ENCODE measurements at regions of chr9 and their contacts with region 1.

Region 1: GRCh38 chr9:137302176-137302994 is at the start of gene NRARP:
- DNase-seq: peak; percentile 90 to 97 (median 92)
- ATAC-seq: peak; percentile 95
- H3K4me3 ChIP-seq: peak within 1 kb of the TSS; percentile 56
- H3K4me3 Mint-ChIP-seq: peak within 1 kb of the TSS; percentile 50 to 88 (median 78)
- H3K27ac ChIP-seq: peak within 1 kb of the TSS; percentile 48
- H3K27ac Mint-ChIP-seq: peak within 1 kb of the TSS in 1 of 9 donors; percentile 26
- H3K4me1 ChIP-seq: peaks cover 7 to 27% of the 10 kb centered on the region in 2 donors
- H3K4me1 Mint-ChIP-seq: peaks cover 0 to 14% (median 11%) of the 10 kb centered on the region in 7 donors
- H3K27me3 ChIP-seq: peaks cover 15 to 19% of the 10 kb centered on the region in 2 donors
- H3K27me3 Mint-ChIP-seq: peaks cover 0 to 30% (median 5%) of the 10 kb centered on the region in 5 donors
- total RNA-seq, gene NRARP: 0.70 to 2.7 (median 1.7) TPM

Region 2: DNA sequence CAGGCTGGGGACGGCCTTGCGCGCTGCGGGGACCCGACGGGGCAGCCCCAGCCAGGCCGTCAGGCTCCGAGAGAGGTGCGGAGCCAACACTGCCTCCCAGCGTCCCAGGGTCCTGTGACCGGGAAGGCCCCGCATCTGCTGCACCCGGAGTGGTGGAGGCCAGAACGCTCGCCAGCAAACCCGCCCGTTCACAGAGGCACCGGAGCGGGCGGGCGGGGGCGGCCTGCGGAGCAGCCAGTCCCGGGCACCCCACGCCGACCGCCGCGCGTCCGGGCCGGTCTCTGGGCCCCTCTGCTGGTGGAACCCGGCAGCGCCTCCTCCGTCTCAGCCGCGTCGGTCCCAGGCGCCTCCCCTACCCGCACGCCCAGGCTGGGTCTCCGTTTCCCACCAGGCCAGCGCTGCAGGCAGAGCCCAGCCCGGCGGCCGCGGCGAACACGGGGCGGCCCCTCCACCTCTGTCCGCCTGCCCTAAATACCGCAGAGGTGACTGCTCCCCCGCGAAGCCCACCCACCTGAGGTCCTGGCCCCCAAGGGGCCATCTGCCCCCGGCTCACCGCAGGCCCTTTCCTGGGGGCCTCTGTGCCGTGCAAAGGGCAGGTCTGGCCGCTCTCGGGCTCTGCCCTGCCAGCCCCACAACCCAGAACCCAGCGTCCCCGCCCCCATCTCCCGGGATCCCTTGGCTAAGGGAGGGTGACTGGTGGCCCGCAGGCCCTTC is 104.6 kb after region 1 on chr9:
- CTCF ChIA-PET with region 1: interaction called, 4 read pairs
- POLR2A ChIA-PET with region 1: no interaction called
- intact Hi-C with region 1: loop called (anchors 1 to 2 kb)
- DNase-seq: peak; percentile 34 to 76 (median 48)
- ATAC-seq: peak; percentile 88
- H3K4me3 ChIP-seq: no peak overlapping the region
- H3K4me3 Mint-ChIP-seq: peak overlapping the region in 1 of 10 donors; percentile 61
- H3K27ac ChIP-seq: no peak overlapping the region
- H3K27ac Mint-ChIP-seq: no peak overlapping the region
- H3K4me1 ChIP-seq: peaks cover 3% of the 10 kb centered on the region in 2 donors
- H3K4me1 Mint-ChIP-seq: peaks cover 0 to 12% (median 6%) of the 10 kb centered on the region in 7 donors
- H3K27me3 ChIP-seq: no peaks in the 10 kb centered on the region
- H3K27me3 Mint-ChIP-seq: peaks cover 0 to 4% (median 0%) of the 10 kb centered on the region in 5 donors

Region 3: DNA sequence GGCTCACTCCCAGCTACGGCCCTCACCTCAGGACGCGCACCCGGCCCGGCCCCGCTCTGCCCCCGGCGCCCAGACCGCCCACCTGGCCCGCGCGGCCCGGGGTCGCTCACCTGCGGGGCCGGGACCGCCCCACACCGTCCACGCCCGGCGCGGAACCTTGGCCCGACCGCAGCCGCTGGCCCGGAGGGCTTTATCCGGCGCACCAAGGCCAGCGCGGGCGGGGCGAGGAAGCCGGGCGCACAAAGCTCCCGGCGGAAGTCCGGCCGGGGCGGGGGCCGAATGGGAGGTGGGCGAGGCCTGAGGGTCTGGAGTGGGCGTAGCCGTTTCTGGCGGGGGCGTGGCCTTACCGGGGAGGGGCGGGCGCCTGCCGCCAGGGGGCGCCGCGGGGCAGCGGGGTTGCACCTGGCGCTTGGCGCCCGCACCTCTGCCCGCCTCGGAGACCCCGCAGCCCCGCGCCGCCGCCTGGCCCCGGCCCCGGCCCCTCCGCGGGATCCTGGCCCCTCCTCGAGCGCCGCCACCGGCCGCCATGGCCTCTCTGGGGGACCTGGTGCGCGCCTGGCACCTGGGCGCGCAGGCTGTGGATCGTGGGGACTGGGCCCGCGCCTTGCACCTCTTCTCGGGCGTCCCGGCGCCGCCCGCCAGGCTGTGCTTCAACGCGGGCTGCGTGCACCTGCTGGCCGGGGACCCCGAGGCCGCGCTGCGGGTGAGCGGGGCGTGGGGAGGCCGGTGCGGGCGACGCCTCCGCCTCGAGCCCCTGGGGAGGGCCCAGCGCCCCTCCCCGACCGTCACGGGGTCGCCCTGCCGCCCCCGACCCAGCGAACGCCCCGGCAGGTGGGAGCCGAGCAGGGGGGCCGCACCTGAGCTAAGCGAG is 120.9 kb after region 1 on chr9 and contains the starts of genes EXD3 and NOXA1:
- CTCF ChIA-PET with region 1: interaction called, 4 read pairs
- POLR2A ChIA-PET with region 1: interaction called, 4 read pairs
- intact Hi-C with region 1: loop called in 1 of 2 experiments (anchors 5 kb)
- DNase-seq: peak; percentile 84 to 99 (median 91)
- ATAC-seq: peak; percentile 97
- H3K4me3 ChIP-seq: peak within 1 kb of the TSS; percentile 65
- H3K4me3 Mint-ChIP-seq: peak within 1 kb of the TSS; percentile 76 to 90 (median 82)
- H3K27ac ChIP-seq: peak within 1 kb of the TSS; percentile 62
- H3K27ac Mint-ChIP-seq: peak within 1 kb of the TSS; percentile 28 to 91 (median 66)
- H3K4me1 ChIP-seq: peaks cover 0 to 5% of the 10 kb centered on the region in 2 donors
- H3K4me1 Mint-ChIP-seq: peaks cover 2 to 21% (median 13%) of the 10 kb centered on the region in 7 donors
- H3K27me3 ChIP-seq: no peaks in the 10 kb centered on the region
- H3K27me3 Mint-ChIP-seq: peaks cover 0 to 9% (median 0%) of the 10 kb centered on the region in 5 donors
- total RNA-seq, gene EXD3: 11.7 to 27.2 (median 24.7) TPM
- total RNA-seq, gene NOXA1: 0.94 to 11.1 (median 6.0) TPM

Region 4: DNA sequence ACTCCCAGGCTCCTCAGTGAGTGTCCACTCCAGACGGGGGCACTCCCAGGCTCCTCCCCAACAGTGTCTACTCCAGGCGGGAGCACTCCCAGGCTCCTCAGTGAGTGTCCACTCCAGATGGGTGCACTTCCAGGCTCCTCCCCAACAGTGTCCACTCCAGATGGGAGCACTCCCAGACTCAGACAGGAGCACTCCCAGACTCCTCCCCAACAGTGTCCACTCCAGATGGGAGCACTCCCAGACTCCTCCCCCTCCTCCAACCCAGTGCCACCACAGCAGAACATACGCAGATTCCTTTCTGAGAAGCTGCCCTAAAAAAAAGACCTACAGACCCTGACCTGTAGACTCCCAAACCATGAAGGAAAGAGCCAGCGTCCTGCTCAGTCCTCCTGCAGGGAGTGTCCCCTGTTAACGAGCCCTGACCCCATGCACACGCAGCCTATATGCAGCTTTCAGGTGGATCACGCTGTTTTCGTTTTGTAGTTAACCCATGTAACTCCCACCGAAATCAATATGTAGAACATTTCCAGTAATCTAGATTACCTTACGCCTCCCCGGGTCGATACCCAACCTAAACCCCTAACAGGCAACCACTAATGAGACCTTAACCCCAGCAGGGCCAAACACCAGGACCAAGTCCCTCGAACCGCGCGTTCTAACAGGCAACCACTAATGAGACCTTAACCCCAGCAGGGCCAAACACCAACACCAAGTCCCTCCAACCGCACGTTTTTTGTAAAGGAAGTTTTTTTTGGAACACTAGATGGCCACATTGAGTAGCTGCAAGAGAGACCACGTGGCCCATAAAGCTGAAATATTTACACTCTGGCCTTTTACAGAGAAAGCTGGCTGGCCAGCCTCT is 232.1 kb after region 1 on chr9:
- CTCF ChIA-PET with region 1: no interaction called
- POLR2A ChIA-PET with region 1: no interaction called
- intact Hi-C with region 1: loop called in 1 of 2 experiments (anchors 10 kb)
- DNase-seq: peak in 5 of 9 donors; percentile 15 to 38 (median 33)
- ATAC-seq: peak; percentile 64
- H3K4me3 ChIP-seq: no peak overlapping the region
- H3K4me3 Mint-ChIP-seq: peak overlapping the region in 5 of 10 donors; percentile 5 to 41 (median 11)
- H3K27ac ChIP-seq: no peak overlapping the region
- H3K27ac Mint-ChIP-seq: peak overlapping the region in 6 of 9 donors; percentile 21 to 86 (median 46)
- H3K4me1 ChIP-seq: peaks cover 11 to 28% of the 10 kb centered on the region in 2 donors
- H3K4me1 Mint-ChIP-seq: peaks cover 16 to 39% (median 29%) of the 10 kb centered on the region in 7 donors
- H3K27me3 ChIP-seq: no peaks in the 10 kb centered on the region
- H3K27me3 Mint-ChIP-seq: no peaks in the 10 kb centered on the region

Region 5: GRCh38 chr9:137682431-137682991 is 380.1 kb after region 1 on chr9:
- CTCF ChIA-PET with region 1: no interaction called
- POLR2A ChIA-PET with region 1: no interaction called
- intact Hi-C with region 1: no loop called
- DNase-seq: no peak
- ATAC-seq: no peak
- H3K4me3 ChIP-seq: no peak overlapping the region
- H3K4me3 Mint-ChIP-seq: no peak overlapping the region
- H3K27ac ChIP-seq: no peak overlapping the region
- H3K27ac Mint-ChIP-seq: no peak overlapping the region
- H3K4me1 ChIP-seq: peaks cover 0 to 9% of the 10 kb centered on the region in 2 donors
- H3K4me1 Mint-ChIP-seq: peaks cover 9 to 74% (median 60%) of the 10 kb centered on the region in 7 donors
- H3K27me3 ChIP-seq: no peaks in the 10 kb centered on the region
- H3K27me3 Mint-ChIP-seq: no peaks in the 10 kb centered on the region

Measured in naive thymus-derived CD4-positive, alpha-beta T cell (primary cell).